Sigmoid colon (tissue), 7 donors: ENCODE measurements at regions of chr12 and their contacts with region 1.

Region 1: DNA sequence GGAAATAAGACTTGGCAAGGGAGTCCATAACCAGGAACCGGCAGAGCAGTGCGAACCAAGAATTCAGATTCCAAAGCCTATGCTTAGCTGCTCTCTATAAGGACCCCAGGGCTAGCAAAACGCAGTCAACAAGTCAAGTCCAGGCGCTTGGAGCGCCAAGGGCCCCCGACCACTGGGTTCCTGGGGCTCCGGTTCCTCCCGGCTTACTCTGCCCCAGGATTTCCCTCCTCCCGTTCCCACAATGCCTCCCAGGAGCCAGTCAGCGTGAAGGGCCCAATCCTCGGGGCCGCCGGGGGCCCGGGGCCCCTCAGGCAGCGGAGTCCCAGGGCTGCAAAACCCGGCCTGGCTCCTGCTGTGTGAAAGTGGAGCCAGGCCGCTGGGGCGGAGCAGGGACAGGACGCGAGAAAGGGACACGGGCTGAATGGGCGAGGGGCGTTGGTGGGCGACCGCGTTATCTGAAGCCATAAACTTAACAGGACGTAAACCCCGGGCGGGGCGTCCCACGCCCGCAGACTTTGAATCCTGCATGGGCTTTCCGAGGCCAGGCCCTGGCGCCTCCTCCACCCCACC is 1.5 kb downstream of the KRT8 start:
- DNase-seq: peak; percentile 90
- H3K4me3 ChIP-seq: peak overlapping the region; percentile 43 to 63 (median 54)
- H3K27ac ChIP-seq: peak overlapping the region; percentile 81 to 92 (median 84)
- H3K4me1 ChIP-seq: peaks cover 5 to 36% (median 23%) of the 10 kb centered on the region in 4 donors
- H3K27me3 ChIP-seq: no peaks in the 10 kb centered on the region
- CTCF ChIP-seq: no peak
- EP300 ChIP-seq: peak in 1 of 4 donors; percentile 12
- POLR2A ChIP-seq: no peak

Region 2: DNA sequence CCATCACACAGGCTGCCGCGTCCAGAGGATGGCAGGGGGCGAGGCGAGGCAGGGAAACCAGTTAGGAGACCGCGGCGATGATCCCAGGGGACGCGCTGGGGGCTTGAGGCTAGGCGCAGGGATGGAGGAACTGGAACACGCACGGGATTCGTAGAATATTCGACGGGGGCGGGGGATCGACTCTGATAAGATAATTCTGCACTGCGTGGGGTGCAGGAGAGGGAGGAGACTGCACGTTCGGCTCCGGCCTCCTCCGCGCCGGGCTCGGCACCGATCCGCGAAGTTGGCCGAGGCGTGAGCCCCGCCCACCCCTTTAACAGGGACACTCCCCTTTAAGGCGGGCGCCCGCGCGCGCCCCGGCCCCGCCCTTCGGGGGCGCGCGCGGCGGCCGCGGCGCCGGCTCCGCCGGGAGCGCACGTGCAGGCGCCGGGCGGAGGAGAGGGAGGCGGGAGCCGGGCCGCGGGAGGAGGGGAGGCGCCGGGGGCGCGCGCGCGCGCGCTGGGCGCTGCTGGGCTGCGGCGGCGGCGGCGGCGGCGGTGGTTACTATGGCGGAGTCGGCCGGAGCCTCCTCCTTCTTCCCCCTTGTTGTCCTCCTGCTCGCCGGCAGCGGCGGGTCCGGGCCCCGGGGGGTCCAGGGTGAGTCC is 952.0 kb before region 1 on chr12 and contains the start of gene ACVR1B:
- intact Hi-C with region 1: loop called (anchors 5 kb)
- DNase-seq: peak; percentile 96
- H3K4me3 ChIP-seq: peak within 1 kb of the TSS; percentile 82 to 100 (median 95)
- H3K27ac ChIP-seq: peak within 1 kb of the TSS; percentile 83 to 94 (median 89)
- H3K4me1 ChIP-seq: peaks cover 0 to 48% (median 33%) of the 10 kb centered on the region in 4 donors
- H3K27me3 ChIP-seq: no peaks in the 10 kb centered on the region
- CTCF ChIP-seq: no peak
- EP300 ChIP-seq: no peak
- POLR2A ChIP-seq: no peak
- total RNA-seq, gene ACVR1B: 7.2 to 9.8 (median 8.6) TPM

Region 3: DNA sequence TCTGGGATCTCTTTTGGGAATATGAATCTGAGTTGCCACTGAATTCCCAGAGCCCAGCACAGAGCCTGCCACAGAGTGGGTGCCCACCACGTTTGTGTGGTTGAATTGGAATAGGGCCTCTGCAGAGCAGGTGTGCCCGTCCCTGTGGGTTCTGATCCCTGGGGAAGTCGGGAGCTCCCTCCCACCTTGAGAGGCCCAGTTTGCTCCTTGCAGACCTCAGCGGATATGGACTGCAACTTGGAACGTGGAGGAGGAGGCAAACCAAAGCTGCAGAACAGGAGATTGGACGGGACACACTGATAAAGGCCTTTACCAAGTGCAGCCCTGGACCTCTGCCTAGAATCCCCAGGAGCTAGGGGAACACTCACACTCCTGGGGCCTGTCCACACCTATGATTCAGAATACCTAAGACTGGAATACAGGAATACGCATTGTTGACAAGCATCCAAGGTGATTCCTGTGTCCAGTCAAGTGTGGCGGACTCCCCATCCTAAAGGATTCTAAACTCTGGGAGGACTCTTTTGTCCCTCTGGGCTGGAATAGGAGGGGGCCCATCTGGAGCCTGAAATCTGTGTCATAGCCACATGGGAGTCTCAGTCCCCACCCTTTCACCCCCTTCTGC is 128.6 kb before region 1 on chr12:
- intact Hi-C with region 1: no loop called
- DNase-seq: no peak
- H3K4me3 ChIP-seq: no peak overlapping the region
- H3K27ac ChIP-seq: no peak overlapping the region
- H3K4me1 ChIP-seq: no peaks in the 10 kb centered on the region
- H3K27me3 ChIP-seq: no peaks in the 10 kb centered on the region
- CTCF ChIP-seq: no peak
- EP300 ChIP-seq: no peak
- POLR2A ChIP-seq: no peak

Region 4: GRCh38 chr12:53591301-53592206 is 688.2 kb after region 1 on chr12:
- intact Hi-C with region 1: no loop called
- DNase-seq: no peak
- H3K4me3 ChIP-seq: no peak overlapping the region
- H3K27ac ChIP-seq: peak overlapping the region in 3 of 4 donors; percentile 15 to 34 (median 19)
- H3K4me1 ChIP-seq: peaks cover 0 to 61% (median 42%) of the 10 kb centered on the region in 4 donors
- H3K27me3 ChIP-seq: no peaks in the 10 kb centered on the region
- CTCF ChIP-seq: no peak
- EP300 ChIP-seq: no peak
- POLR2A ChIP-seq: no peak

Region 5: DNA sequence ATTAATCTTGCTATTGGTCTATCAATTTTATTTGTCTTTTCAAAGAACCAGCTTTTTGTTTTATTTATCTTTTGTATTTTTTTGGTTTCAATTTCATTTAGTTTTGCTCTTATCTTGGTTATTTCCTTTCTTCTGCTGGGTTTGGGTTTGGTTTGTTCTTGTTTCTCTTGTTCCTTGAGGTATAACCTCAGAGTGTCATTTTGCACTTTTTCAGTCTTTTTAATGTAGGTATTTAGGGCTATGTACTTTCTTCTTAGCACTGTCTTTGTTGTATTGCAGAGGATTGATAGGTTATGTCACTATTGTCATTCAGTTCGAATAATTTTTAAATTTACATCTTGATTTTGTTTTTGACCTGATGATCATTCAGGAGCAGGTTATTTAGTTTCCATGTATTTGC is 1837.5 kb after region 1 on chr12:
- intact Hi-C with region 1: no loop called
- DNase-seq: no peak
- H3K4me3 ChIP-seq: no peak overlapping the region
- H3K27ac ChIP-seq: no peak overlapping the region
- H3K4me1 ChIP-seq: no peaks in the 10 kb centered on the region
- H3K27me3 ChIP-seq: no peaks in the 10 kb centered on the region
- CTCF ChIP-seq: no peak
- EP300 ChIP-seq: no peak
- POLR2A ChIP-seq: no peak